Esophagus muscularis mucosa (tissue), 4 donors: ENCODE measurements at regions of chr9 and their contacts with region 1.

Region 1: GRCh38 chr9:91433180-91433579 is 9.5 kb upstream of the NFIL3 start:
- DNase-seq: no peak
- H3K4me3 ChIP-seq: no peak overlapping the region
- H3K27ac ChIP-seq: no peak overlapping the region
- H3K4me1 ChIP-seq: peaks cover 0 to 9% (median 3%) of the 10 kb centered on the region in 4 donors
- H3K27me3 ChIP-seq: no peaks in the 10 kb centered on the region
- CTCF ChIP-seq: peak; percentile 51 to 62 (median 60)
- EP300 ChIP-seq: no peak
- POLR2A ChIP-seq: no peak

Region 2: GRCh38 chr9:91089405-91090129 is 343.6 kb before region 1 on chr9:
- intact Hi-C with region 1: loop called (anchors 5 kb)
- DNase-seq: no peak
- H3K4me3 ChIP-seq: no peak overlapping the region
- H3K27ac ChIP-seq: no peak overlapping the region
- H3K4me1 ChIP-seq: peaks cover 0 to 8% (median 3%) of the 10 kb centered on the region in 4 donors
- H3K27me3 ChIP-seq: no peaks in the 10 kb centered on the region
- CTCF ChIP-seq: peak; percentile 54 to 62 (median 59)
- EP300 ChIP-seq: no peak
- POLR2A ChIP-seq: no peak

Region 3: GRCh38 chr9:91681461-91682305 is 248.5 kb after region 1 on chr9:
- intact Hi-C with region 1: loop called (anchors 10 kb)
- DNase-seq: peak; percentile 92
- H3K4me3 ChIP-seq: peak overlapping the region in 3 of 4 donors; percentile 3 to 18 (median 15)
- H3K27ac ChIP-seq: no peak overlapping the region
- H3K4me1 ChIP-seq: peaks cover 0 to 8% (median 5%) of the 10 kb centered on the region in 4 donors
- H3K27me3 ChIP-seq: no peaks in the 10 kb centered on the region
- CTCF ChIP-seq: peak; percentile 82 to 93 (median 85)
- EP300 ChIP-seq: no peak
- POLR2A ChIP-seq: no peak